Posterior cingulate gyrus (tissue), 11 donors: ENCODE measurements at regions of chr2 and their contacts with region 1.

Region 1: DNA sequence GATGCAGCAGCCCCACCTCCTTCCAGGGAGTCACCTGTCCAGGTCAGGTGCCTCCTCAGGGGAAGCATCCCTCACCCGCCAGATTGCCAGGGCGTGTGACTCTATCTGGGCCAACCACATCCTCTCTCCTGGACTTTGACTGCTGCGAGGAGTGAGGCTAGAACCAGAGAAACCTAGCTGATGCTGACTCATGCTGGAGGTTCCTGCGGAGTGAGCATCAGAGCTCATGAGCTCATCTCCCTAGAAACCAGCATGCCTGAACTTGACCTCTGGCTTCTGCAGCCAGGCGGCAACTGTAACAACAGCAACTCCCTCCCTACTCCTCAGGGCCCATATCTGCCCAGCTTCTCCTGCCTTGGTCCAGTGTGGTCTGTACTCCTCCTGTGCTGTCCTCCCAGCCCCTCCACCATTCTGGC is 28.3 kb upstream of the NT5DC4 start:
- DNase-seq: no peak

Region 2: GRCh38 chr2:112645310-112646101 is 47.0 kb before region 1 on chr2 and contains the start of gene SLC20A1:
- intact Hi-C with region 1: loop called (anchors 5 kb)
- DNase-seq: peak; percentile 96 to 100 (median 98)

Region 3: GRCh38 chr2:112674229-112674628 is 18.3 kb before region 1 on chr2:
- intact Hi-C with region 1: no loop called
- DNase-seq: peak in 3 of 10 donors; percentile 37 to 88 (median 45)